ENCODE measurements at regions of chr9 and their contacts with region 1.

Region 1: DNA sequence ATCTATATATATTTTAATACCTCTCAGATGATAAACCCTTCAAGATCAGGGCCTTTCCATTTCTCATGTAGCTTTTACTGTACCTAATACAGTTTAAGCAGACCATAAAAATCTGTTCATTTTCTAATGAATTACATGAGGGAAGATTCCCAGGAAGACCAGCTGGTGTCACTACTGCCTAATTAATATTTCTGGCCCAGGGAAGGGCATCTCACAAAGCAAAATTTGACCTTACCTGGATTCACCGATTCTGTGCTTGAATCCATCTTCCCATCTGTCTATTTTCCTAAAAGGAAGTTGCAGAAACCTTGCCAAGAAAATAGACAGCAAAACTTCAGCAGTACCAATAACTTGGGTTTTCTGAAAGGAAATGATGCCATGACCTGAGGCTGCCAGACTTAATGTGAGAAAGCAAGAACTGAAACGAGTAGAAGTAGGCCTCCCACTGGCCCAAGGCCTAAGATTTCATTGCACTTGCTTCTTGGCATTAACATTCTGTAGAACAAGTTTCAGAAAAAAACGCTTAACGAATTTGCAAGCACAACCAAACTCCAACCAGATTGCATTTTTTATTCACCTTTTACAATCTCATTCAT is 83.0 kb upstream of the GLIS3 start:
- DNase-seq: no peak
- H3K4me3 ChIP-seq: no peak overlapping the region
- H3K27ac ChIP-seq: no peak overlapping the region
- H3K4me1 ChIP-seq: no peaks in the 10 kb centered on the region
- H3K27me3 ChIP-seq: no peaks in the 10 kb centered on the region
- CTCF ChIP-seq: peak; percentile 39 to 48

Region 2: GRCh38 chr9:4630836-4631235 is 248.0 kb after region 1 on chr9:
- intact Hi-C with region 1: loop called (anchors 10 kb)
- DNase-seq: no peak
- H3K4me3 ChIP-seq: no peak overlapping the region
- H3K27ac ChIP-seq: no peak overlapping the region
- H3K4me1 ChIP-seq: no peaks in the 10 kb centered on the region
- H3K27me3 ChIP-seq: no peaks in the 10 kb centered on the region
- CTCF ChIP-seq: no peak